ENCODE measurements at regions of chr2 and their contacts with region 1.

Region 1: DNA sequence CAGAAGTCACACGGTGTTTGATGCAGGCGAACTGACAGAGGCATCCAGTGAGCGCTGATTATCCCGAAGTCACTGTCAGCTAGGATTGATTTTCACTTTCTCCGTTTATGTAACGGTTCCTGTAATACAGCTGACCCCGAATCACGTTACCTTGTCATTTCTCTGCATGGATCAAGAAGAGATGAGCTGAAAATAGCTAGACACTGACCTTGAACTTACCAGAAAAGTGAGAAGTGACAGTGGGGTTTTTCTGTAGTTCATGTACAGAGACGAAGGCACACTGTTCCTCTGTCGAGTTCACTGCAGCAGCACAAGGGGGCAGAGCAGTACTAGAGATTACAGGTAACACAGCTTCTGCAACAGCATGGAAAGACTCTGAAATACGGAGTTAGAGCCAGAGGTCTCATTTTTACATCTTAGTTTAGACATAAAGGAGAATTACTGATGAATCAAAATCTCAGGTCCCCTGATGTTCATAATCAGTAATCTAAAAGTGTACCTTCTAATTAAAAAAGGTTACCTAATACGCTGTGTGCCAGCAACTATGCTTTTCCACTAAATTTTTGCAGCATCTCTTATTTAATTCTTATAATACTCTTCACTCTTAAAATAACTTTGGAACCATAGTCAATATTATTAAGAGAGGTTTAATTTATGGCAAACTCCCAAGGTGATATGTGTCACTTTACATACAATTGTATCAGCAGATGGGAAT is 33.1 kb downstream of the ARHGAP15 start:
- DNase-seq: peak; percentile 70
- ATAC-seq: peak; percentile 95
- H3K4me3 Mint-ChIP-seq: no peak overlapping the region
- H3K27ac Mint-ChIP-seq: peak overlapping the region; percentile 31
- H3K4me1 Mint-ChIP-seq: peaks cover 79% of the 10 kb centered on the region
- H3K27me3 Mint-ChIP-seq: no peaks in the 10 kb centered on the region
- CTCF ChIP-seq: peak; percentile 82

Region 2: GRCh38 chr2:143140864-143141661 is 21.2 kb before region 1 on chr2:
- CTCF ChIA-PET with region 1: interaction called, 17 read pairs
- POLR2A ChIA-PET with region 1: interaction called, 4 read pairs
- intact Hi-C with region 1: no loop called
- DNase-seq: no peak
- ATAC-seq: peak; percentile 54
- H3K4me3 Mint-ChIP-seq: peak overlapping the region; percentile 71
- H3K27ac Mint-ChIP-seq: peak overlapping the region; percentile 92
- H3K4me1 Mint-ChIP-seq: peaks cover 83% of the 10 kb centered on the region
- H3K27me3 Mint-ChIP-seq: no peaks in the 10 kb centered on the region
- CTCF ChIP-seq: no peak

Region 3: GRCh38 chr2:143182649-143183048 is 20.4 kb after region 1 on chr2:
- CTCF ChIA-PET with region 1: interaction called, 15 read pairs
- POLR2A ChIA-PET with region 1: no interaction called
- intact Hi-C with region 1: no loop called
- DNase-seq: no peak
- ATAC-seq: no peak
- H3K4me3 Mint-ChIP-seq: no peak overlapping the region
- H3K27ac Mint-ChIP-seq: no peak overlapping the region
- H3K4me1 Mint-ChIP-seq: peaks cover 46% of the 10 kb centered on the region
- H3K27me3 Mint-ChIP-seq: no peaks in the 10 kb centered on the region
- CTCF ChIP-seq: no peak

Region 4: GRCh38 chr2:143230506-143231253 is 68.4 kb after region 1 on chr2:
- CTCF ChIA-PET with region 1: interaction called, 51 read pairs
- POLR2A ChIA-PET with region 1: no interaction called
- intact Hi-C with region 1: no loop called
- DNase-seq: no peak
- ATAC-seq: no peak
- H3K4me3 Mint-ChIP-seq: no peak overlapping the region
- H3K27ac Mint-ChIP-seq: peak overlapping the region; percentile 25
- H3K4me1 Mint-ChIP-seq: peaks cover 37% of the 10 kb centered on the region
- H3K27me3 Mint-ChIP-seq: no peaks in the 10 kb centered on the region
- CTCF ChIP-seq: no peak

Region 5: GRCh38 chr2:143264851-143265250 is 102.6 kb after region 1 on chr2:
- CTCF ChIA-PET with region 1: interaction called, 169 read pairs
- POLR2A ChIA-PET with region 1: interaction called, 3 read pairs
- intact Hi-C with region 1: no loop called
- DNase-seq: no peak
- ATAC-seq: no peak
- H3K4me3 Mint-ChIP-seq: no peak overlapping the region
- H3K27ac Mint-ChIP-seq: no peak overlapping the region
- H3K4me1 Mint-ChIP-seq: peaks cover 54% of the 10 kb centered on the region
- H3K27me3 Mint-ChIP-seq: no peaks in the 10 kb centered on the region
- CTCF ChIP-seq: no peak